ENCODE measurements at regions of chr9 and their contacts with region 1.

Region 1: GRCh38 chr9:15295761-15296405 is 11.1 kb downstream of the TTC39B start:
- DNase-seq: no peak
- ATAC-seq: peak; percentile 32 to 73 (median 53)
- H3K4me3 ChIP-seq: peak overlapping the region in 11 of 12 donors; percentile 18 to 62 (median 52)
- H3K27ac ChIP-seq: peak overlapping the region; percentile 61 to 92 (median 84)
- H3K4me1 ChIP-seq: peaks cover 0 to 72% (median 15%) of the 10 kb centered on the region in 12 donors
- H3K27me3 ChIP-seq: no peaks in the 10 kb centered on the region
- CTCF ChIP-seq: no peak
- POLR2A ChIP-seq: no peak

Region 2: GRCh38 chr9:15306757-15307534 is 11.1 kb after region 1 on chr9 and contains the start of gene TTC39B:
- intact Hi-C with region 1: loop called in 1 of 10 experiments (anchors 1 kb)
- DNase-seq: peak; percentile 94 to 96 (median 95)
- ATAC-seq: peak; percentile 94 to 99 (median 99)
- H3K4me3 ChIP-seq: peak within 1 kb of the TSS; percentile 63 to 99 (median 86)
- H3K27ac ChIP-seq: peak within 1 kb of the TSS; percentile 6 to 88 (median 76)
- H3K4me1 ChIP-seq: peaks cover 0 to 19% (median 11%) of the 10 kb centered on the region in 12 donors
- H3K27me3 ChIP-seq: peaks cover 0 to 4% (median 0%) of the 10 kb centered on the region in 9 donors
- CTCF ChIP-seq: peak in 4 of 12 donors; percentile 16 to 45 (median 28)
- POLR2A ChIP-seq: peak in 1 of 2 donors; percentile 78
- total RNA-seq, gene TTC39B: 1.0 to 5.9 (median 1.5) TPM